MCF 10A (cell line): ENCODE measurements at regions of chr3 and their contacts with region 1.

Region 1: GRCh38 chr3:133384331-133385027 is 15.4 kb upstream of the BFSP2 start:
- DNase-seq: peak; percentile 77
- H3K4me3 Mint-ChIP-seq: no peak overlapping the region
- H3K27ac Mint-ChIP-seq: no peak overlapping the region
- H3K4me1 Mint-ChIP-seq: peaks cover 17% of the 10 kb centered on the region
- H3K27me3 Mint-ChIP-seq: peaks cover 21% of the 10 kb centered on the region
- CTCF ChIP-seq: peak; percentile 76

Region 2: DNA sequence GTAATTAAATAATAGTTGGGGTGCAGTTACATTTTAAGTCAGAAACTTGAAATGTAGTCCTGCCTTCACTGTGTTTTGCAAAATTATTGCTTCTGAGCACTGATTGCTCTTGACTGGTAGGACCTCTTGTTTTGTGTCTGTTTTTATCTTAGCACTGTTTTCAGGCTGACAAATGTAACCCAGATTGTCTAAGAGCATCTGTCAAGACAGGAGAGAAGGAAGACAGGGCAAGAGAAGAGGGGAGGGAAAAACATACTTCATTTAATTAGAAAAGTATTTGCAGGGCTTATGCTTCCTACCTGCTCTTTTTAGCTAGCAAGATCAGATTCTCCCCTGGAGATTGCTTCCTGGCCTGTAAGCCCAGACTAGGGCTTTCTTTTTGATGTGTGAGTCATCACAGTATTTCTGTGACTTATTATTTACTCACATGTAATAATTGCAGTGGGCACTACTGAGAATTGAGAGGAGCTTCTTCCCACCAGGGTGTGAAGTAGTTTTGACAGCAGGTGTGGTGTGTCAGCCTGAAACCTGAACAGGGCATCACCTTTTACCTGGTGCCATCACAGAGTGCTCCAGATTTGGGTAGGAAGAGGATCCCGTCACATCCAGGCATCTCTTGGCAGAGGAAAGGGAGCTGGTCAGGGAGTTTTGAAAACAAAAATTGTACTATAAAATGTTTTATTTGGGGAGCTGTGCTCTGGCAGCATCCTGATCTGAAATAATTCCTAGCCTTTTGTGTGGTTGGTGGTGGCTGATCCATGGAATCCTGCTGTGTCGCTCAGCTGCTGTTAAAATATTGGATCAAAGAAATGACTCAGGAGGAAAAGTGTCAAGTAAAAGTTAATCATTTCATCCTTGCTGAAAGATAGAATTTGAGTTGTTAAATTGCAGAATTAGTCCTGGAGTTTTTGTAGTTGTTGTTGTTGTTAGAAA is 248.1 kb before region 1 on chr3:
- CTCF ChIA-PET with region 1: no interaction called
- POLR2A ChIA-PET with region 1: no interaction called
- intact Hi-C with region 1: loop called (anchors 10 kb)
- DNase-seq: peak; percentile 35
- H3K4me3 Mint-ChIP-seq: no peak overlapping the region
- H3K27ac Mint-ChIP-seq: no peak overlapping the region
- H3K4me1 Mint-ChIP-seq: no peaks in the 10 kb centered on the region
- H3K27me3 Mint-ChIP-seq: peaks cover 30% of the 10 kb centered on the region
- CTCF ChIP-seq: no peak

Region 3: DNA sequence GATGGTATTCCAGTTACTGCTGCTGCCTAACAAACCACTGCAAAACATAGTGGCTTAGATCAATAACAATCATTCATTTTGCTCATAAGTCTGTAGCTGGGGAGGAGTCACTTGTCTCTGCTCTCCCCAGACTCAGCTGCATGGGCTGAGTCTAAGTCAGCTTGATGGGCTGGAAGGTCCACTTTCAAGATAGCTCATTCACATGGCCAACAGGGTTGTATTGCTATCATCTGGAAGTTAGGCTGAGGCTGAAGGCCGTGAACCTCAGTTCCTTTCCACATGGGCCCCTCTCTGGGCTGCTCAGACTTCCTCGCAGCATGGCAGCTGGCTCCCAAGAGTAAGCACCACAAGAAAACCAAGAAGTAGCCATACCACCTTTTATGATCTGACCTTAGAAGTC is 13.3 kb before region 1 on chr3:
- CTCF ChIA-PET with region 1: interaction called, 11 read pairs
- POLR2A ChIA-PET with region 1: interaction called, 3 read pairs
- intact Hi-C with region 1: no loop called
- DNase-seq: no peak
- H3K4me3 Mint-ChIP-seq: no peak overlapping the region
- H3K27ac Mint-ChIP-seq: no peak overlapping the region
- H3K4me1 Mint-ChIP-seq: no peaks in the 10 kb centered on the region
- H3K27me3 Mint-ChIP-seq: peaks cover 52% of the 10 kb centered on the region
- CTCF ChIP-seq: no peak